ENCODE measurements at regions of chr12 and their contacts with region 1.

Region 1: DNA sequence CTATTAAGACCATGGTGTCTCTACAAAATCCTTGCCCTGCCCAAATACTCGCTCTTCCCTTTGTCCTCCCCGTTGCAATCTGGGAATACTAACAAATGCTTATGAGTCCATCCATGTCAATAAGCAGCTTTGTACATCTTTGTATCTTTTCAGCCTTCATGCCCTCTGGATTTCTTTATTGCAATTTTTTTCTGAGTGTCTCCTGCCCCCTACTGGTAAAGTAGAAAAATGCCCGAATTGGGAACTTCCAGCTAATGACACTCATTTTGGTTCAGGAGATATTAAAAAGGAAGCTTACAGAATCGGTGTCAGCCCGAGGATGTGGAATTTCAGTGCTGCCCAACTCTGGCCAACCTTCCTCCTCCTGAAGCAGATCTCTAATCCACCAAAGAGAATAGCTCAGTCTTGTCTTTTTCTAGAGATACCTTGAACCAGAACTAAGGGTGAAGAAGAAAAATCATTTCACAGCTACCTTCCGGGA is 46.0 kb downstream of the SH2B3 start:
- DNase-seq: no peak
- H3K4me3 ChIP-seq: no peak overlapping the region
- CTCF ChIP-seq: peak; percentile 41

Region 2: GRCh38 chr12:111386885-111387284 is 64.8 kb before region 1 on chr12:
- CTCF ChIA-PET with region 1: interaction called, 899 read pairs
- POLR2A ChIA-PET with region 1: no interaction called
- DNase-seq: no peak
- H3K4me3 ChIP-seq: no peak overlapping the region
- CTCF ChIP-seq: no peak

Region 3: GRCh38 chr12:111428728-111429175 is 22.9 kb before region 1 on chr12:
- CTCF ChIA-PET with region 1: interaction called, 20 read pairs
- POLR2A ChIA-PET with region 1: no interaction called
- DNase-seq: no peak
- H3K4me3 ChIP-seq: no peak overlapping the region
- CTCF ChIP-seq: no peak

Region 4: GRCh38 chr12:111462210-111462769 is 10.6 kb after region 1 on chr12:
- CTCF ChIA-PET with region 1: interaction called, 158 read pairs
- POLR2A ChIA-PET with region 1: interaction called, 3 read pairs
- DNase-seq: peak; percentile 78
- H3K4me3 ChIP-seq: no peak overlapping the region
- CTCF ChIP-seq: no peak

Measured in AG04449 (cell line).